K562 (cell line): ENCODE measurements at regions of chr3 and their contacts with region 1.

Region 1: DNA sequence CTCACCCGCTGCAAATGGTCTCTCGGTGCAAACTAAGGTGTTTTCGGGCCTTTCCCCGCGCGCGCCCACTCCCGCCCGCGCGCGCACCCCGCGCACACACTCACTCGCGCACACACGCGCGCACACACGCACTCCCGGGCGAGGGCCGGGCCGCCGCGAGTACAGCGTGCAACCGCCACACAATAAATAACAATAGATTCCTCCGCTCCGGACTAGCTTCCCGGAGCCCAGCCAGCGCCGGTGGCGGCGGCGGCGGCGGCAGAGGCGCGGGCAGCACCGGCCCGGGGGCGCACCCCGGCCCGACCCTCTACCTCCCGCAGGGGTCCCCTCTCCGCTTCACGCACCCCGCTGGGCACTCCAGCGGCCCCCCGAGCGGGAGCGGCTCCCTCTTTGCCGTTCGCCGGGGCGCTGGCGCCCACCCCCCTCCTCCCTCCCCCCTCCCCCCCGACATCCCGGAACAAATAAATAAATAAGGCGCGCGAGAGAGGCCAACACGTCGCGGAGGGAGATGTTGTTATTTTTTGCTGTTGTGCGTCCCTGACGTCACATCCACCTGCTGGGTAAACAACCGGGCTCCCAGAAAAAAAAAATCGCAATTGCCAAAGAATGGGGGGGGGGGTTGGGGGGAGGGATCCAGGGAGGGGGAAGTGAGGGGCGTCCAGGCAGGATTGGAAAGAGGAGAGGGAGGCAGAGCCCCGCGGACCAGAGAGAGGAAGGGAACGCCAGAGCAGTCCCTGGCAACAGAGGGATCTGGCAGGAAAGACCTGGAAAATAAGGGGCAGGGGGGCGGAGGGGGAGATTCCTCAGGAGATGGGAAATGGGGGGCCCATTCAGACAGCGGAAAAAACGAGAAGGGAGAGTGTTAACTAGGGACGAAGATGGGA is at the start of gene FOXP1:
- DNase-seq: peak; percentile 32 to 75 (median 43)
- ATAC-seq: peak; percentile 68
- H3K4me3 ChIP-seq: peak within 1 kb of the TSS; percentile 65
- H3K27ac ChIP-seq: peak within 1 kb of the TSS; percentile 90
- H3K4me1 ChIP-seq: peaks cover 8 to 27% of the 10 kb centered on the region in 2 experiments; a peak in 4 of 5 replicates
- H3K27me3 ChIP-seq: no peaks in the 10 kb centered on the region
- CTCF ChIP-seq: no peak
- EP300 ChIP-seq: no peak
- POLR2A ChIP-seq: no peak; the same call in 1 of the 2 replicates
- RAD21 ChIP-seq: no peak
- polyA plus RNA-seq, gene FOXP1: 7.7 to 13.8 TPM

Region 2: GRCh38 chr3:70550723-70551319 is 1033.0 kb before region 1 on chr3:
- CTCF ChIA-PET with region 1: interaction called, 4 read pairs
- POLR2A ChIA-PET with region 1: no interaction called
- in situ Hi-C with region 1: no loop called
- intact Hi-C with region 1: loop called (anchors 5 kb)
- DNase-seq: peak in 1 of 4 experiments; percentile 57
- ATAC-seq: peak; percentile 92
- H3K4me3 ChIP-seq: no peak overlapping the region
- H3K27ac ChIP-seq: no peak overlapping the region
- H3K4me1 ChIP-seq: no peaks in the 10 kb centered on the region
- H3K27me3 ChIP-seq: no peaks in the 10 kb centered on the region
- CTCF ChIP-seq: peak; percentile 51 to 54 (median 53)
- EP300 ChIP-seq: no peak
- POLR2A ChIP-seq: no peak
- RAD21 ChIP-seq: peak; percentile 45 to 63; a peak in 3 of 4 replicates

Region 3: DNA sequence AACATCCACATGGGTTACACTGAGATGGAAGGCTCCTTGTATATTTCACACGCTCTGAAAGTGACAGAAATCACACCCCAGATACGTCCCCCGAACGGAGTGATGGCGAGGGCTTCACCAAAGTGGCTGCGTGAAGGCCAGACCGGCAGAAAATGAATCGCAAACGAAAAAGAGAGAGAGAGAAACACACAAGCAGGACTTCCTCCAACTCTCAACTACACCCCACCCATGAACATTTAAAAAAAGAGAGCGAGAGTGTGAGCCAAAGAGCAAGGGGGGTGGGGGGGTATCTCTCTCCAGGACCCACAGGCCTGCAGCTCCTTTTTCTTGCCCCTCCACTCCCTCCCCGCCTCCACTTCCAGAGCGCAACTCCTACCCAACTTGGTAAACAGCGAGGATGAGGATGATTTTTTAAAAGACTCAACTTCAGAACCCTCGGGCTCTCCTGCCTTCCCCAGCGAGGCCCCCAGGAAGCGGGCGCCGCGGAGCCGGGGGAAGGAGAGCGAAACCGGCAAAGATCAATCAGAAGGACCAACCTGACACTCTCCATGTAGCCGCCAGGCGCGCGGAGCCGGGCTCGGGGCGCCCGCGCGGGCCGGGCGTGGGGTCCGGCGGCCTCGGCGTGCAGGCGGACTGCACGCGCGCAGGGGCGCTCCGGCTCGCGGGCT is 519.4 kb before region 1 on chr3:
- CTCF ChIA-PET with region 1: no interaction called
- POLR2A ChIA-PET with region 1: interaction called, 3 read pairs
- in situ Hi-C with region 1: no loop called
- intact Hi-C with region 1: loop called (anchors 10 kb)
- DNase-seq: peak in 3 of 4 experiments; percentile 11 to 40 (median 33)
- ATAC-seq: peak; percentile 56
- H3K4me3 ChIP-seq: peak overlapping the region; percentile 43
- H3K27ac ChIP-seq: peak overlapping the region; percentile 66; the same call in 2 of the 3 replicates
- H3K4me1 ChIP-seq: peaks cover 11 to 30% of the 10 kb centered on the region in 2 experiments; a peak in 4 of 5 replicates
- H3K27me3 ChIP-seq: no peaks in the 10 kb centered on the region
- CTCF ChIP-seq: no peak
- EP300 ChIP-seq: no peak
- POLR2A ChIP-seq: no peak
- RAD21 ChIP-seq: no peak

Region 4: GRCh38 chr3:71397046-71397445 is 186.8 kb before region 1 on chr3:
- CTCF ChIA-PET with region 1: no interaction called
- POLR2A ChIA-PET with region 1: no interaction called
- in situ Hi-C with region 1: no loop called
- intact Hi-C with region 1: loop called (anchors 5 kb)
- DNase-seq: peak; percentile 32 to 77 (median 34)
- ATAC-seq: peak; percentile 51
- H3K4me3 ChIP-seq: no peak overlapping the region
- H3K27ac ChIP-seq: peak overlapping the region; percentile 10; the same call in 1 of the 3 replicates
- H3K4me1 ChIP-seq: peaks cover 10 to 56% of the 10 kb centered on the region in 2 experiments; a peak in 4 of 5 replicates
- H3K27me3 ChIP-seq: no peaks in the 10 kb centered on the region
- CTCF ChIP-seq: peak; percentile 10 to 43 (median 43); a peak in 4 of 6 replicates
- EP300 ChIP-seq: no peak
- POLR2A ChIP-seq: no peak
- RAD21 ChIP-seq: 0 out of 4 replicates have a peak, but pooled peaks of 1 of the 2 experiments have one; percentile 26

Region 5: DNA sequence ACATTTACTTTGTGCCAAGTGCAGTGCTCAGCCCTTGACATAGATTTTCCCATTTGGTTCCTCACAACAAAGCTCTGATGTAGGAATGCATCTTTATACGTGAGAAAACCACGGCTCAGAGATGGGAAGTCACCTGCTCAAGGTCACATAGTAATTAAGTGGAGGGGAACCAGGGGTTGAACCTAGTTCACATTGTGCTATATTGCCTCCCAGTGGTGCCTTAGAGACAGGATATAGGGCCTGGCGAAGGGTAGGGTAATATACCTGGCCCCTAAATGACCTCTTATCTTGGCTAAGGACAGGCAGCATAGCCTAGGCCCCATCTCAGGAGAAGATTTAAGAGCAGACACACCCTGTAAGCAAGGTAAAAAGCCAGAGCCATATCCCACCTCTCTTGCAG is 71.8 kb before region 1 on chr3:
- CTCF ChIA-PET with region 1: no interaction called
- POLR2A ChIA-PET with region 1: interaction called, 5 read pairs
- in situ Hi-C with region 1: no loop called
- intact Hi-C with region 1: loop called (anchors 2 kb)
- DNase-seq: peak; percentile 12 to 78 (median 50)
- ATAC-seq: peak; percentile 96
- H3K4me3 ChIP-seq: no peak overlapping the region
- H3K27ac ChIP-seq: 0 out of 3 replicates have a peak overlapping the region, but pooled peaks have one; percentile 33
- H3K4me1 ChIP-seq: peaks cover 4 to 29% of the 10 kb centered on the region in 2 experiments; a peak in 2 of 5 replicates
- H3K27me3 ChIP-seq: no peaks in the 10 kb centered on the region
- CTCF ChIP-seq: peak; percentile 55 to 67 (median 62)
- EP300 ChIP-seq: no peak
- POLR2A ChIP-seq: no peak
- RAD21 ChIP-seq: peak; percentile 59 to 80

Region 6: DNA sequence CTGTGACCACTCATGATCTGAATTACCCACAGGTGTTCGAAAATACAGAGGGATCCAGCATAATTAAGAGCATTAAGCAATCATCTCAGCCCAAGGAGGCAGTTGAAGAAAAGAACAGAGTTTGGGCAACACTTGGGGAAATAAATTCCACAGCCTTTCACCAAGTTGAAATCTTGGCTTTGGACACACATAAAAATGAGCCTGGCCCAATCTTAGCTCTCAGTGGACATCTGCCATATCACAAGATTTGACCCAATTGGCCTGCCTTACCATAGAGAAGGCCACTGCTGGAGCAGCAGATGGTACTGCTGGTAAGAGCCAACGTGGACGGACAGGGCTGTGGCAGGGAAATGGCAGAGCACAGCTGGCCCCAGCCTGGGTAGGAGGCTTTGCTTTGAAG is 13.3 kb before region 1 on chr3:
- CTCF ChIA-PET with region 1: no interaction called
- POLR2A ChIA-PET with region 1: no interaction called
- in situ Hi-C with region 1: no loop called
- intact Hi-C with region 1: no loop called
- DNase-seq: no peak
- ATAC-seq: no peak
- H3K4me3 ChIP-seq: no peak overlapping the region
- H3K27ac ChIP-seq: no peak overlapping the region
- H3K4me1 ChIP-seq: no peaks in the 10 kb centered on the region
- H3K27me3 ChIP-seq: no peaks in the 10 kb centered on the region
- CTCF ChIP-seq: no peak
- EP300 ChIP-seq: no peak
- POLR2A ChIP-seq: no peak
- RAD21 ChIP-seq: no peak